CD8-positive, alpha-beta memory T cell (primary cell): ENCODE measurements at regions of chr17 and their contacts with region 1.

Region 1: DNA sequence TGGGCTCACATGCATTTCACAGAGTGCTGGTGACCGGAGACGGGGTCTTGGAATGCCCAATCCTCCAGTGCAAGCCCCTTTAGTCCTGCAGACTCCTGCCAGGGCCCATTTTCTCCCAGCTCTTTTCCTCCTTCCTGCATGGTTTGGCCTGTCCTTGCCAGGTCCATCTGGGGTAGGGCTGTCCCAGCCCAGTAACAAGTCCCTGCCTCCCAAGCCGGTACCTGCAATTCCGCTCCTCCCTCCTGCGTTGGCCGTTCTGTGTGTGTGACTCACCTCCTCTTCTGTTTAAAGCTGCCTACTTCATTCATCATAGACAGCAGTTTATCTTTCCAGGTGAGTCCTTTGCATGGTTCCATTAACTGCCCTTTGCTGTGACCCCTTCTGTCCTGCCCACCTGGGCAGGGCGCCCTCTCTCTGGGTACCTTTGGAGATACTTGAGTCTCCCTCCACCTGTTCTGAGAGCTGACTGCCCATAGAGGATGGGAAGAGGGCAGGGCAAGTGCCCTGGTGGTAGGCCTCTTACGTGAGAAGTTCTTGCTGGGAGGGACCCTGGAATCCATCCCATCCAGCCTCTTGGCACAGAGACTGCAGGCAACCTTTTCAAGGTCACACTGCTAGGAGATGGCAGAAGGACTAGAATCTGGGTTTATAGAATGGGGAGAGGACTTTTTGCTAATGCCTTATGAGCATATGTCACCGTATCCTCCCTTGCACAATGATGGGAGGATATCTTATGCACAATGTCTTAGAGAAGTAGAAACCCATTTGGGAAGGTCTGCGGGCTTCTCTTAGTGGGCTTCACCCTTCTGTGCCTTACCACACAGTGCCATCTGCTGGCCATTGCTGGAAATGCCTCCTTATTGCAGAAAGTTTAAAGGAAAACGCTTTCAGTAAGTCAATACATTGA is 29.7 kb upstream of the LGALS9 start:
- DNase-seq: peak; percentile 61 to 86 (median 74)
- H3K4me3 ChIP-seq: no peak overlapping the region
- H3K4me3 Mint-ChIP-seq: no peak overlapping the region
- H3K27ac ChIP-seq: no peak overlapping the region
- H3K27ac Mint-ChIP-seq: peak overlapping the region in 3 of 8 donors; percentile 42 to 78 (median 55)
- H3K4me1 ChIP-seq: no peaks in the 10 kb centered on the region
- H3K4me1 Mint-ChIP-seq: peaks cover 4 to 6% (median 4%) of the 10 kb centered on the region in 3 donors
- H3K27me3 ChIP-seq: no peaks in the 10 kb centered on the region
- H3K27me3 Mint-ChIP-seq: no peaks in the 10 kb centered on the region

Region 2: GRCh38 chr17:27236717-27237315 is 364.5 kb before region 1 on chr17:
- CTCF ChIA-PET with region 1: interaction called, 62 read pairs
- POLR2A ChIA-PET with region 1: no interaction called
- DNase-seq: peak; percentile 51 to 80 (median 63)
- H3K4me3 ChIP-seq: no peak overlapping the region
- H3K4me3 Mint-ChIP-seq: no peak overlapping the region
- H3K27ac ChIP-seq: no peak overlapping the region
- H3K27ac Mint-ChIP-seq: no peak overlapping the region
- H3K4me1 ChIP-seq: no peaks in the 10 kb centered on the region
- H3K4me1 Mint-ChIP-seq: no peaks in the 10 kb centered on the region
- H3K27me3 ChIP-seq: no peaks in the 10 kb centered on the region
- H3K27me3 Mint-ChIP-seq: peaks cover 0 to 2% of the 10 kb centered on the region in 2 donors

Region 3: GRCh38 chr17:27245230-27245696 is 356.1 kb before region 1 on chr17:
- CTCF ChIA-PET with region 1: interaction called, 16 read pairs
- POLR2A ChIA-PET with region 1: no interaction called
- DNase-seq: peak; percentile 7 to 60 (median 15)
- H3K4me3 ChIP-seq: no peak overlapping the region
- H3K4me3 Mint-ChIP-seq: no peak overlapping the region
- H3K27ac ChIP-seq: no peak overlapping the region
- H3K27ac Mint-ChIP-seq: peak overlapping the region in 2 of 8 donors; percentile 43 to 68
- H3K4me1 ChIP-seq: no peaks in the 10 kb centered on the region
- H3K4me1 Mint-ChIP-seq: no peaks in the 10 kb centered on the region
- H3K27me3 ChIP-seq: no peaks in the 10 kb centered on the region
- H3K27me3 Mint-ChIP-seq: peaks cover 6 to 18% of the 10 kb centered on the region in 2 donors

Region 4: DNA sequence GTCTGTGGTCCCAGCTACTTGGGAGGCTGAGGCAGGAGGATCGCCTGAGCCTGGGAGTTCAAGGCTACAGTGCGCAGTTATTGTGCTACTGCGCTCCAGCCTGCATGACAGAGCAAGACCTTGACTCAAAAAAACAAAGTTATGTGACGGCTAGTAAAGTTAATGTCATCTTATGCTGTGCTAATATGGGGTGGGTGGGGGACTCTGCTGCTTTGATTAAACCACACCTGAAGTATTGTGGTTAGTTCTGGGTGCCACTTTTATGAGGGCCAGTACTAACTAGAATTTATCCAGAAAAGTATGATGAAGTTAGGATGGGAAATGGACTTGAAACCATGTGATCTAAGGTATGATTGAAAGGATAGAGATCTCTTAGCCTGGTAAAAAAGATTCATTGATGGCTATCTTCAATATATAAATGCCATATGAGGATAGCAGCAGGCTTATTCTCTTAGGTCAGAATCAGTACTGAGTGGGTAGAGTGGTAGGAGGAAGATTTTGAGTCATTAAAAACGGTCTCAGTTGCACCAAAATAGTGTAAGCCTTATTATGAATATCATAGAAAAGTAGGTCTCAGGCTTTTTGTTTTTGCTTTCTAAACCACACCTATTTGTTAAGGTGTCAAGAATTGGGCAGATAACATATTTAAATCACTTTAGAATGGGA is 301.8 kb before region 1 on chr17:
- CTCF ChIA-PET with region 1: no interaction called
- POLR2A ChIA-PET with region 1: no interaction called
- DNase-seq: no peak
- H3K4me3 ChIP-seq: no peak overlapping the region
- H3K4me3 Mint-ChIP-seq: peak overlapping the region; percentile 13 to 81 (median 27)
- H3K27ac ChIP-seq: no peak overlapping the region
- H3K27ac Mint-ChIP-seq: peak overlapping the region in 7 of 8 donors; percentile 5 to 92 (median 57)
- H3K4me1 ChIP-seq: peaks cover 53% of the 10 kb centered on the region
- H3K4me1 Mint-ChIP-seq: peaks cover 61 to 86% (median 79%) of the 10 kb centered on the region in 3 donors
- H3K27me3 ChIP-seq: no peaks in the 10 kb centered on the region
- H3K27me3 Mint-ChIP-seq: no peaks in the 10 kb centered on the region

Region 5: GRCh38 chr17:27353461-27354050 is 247.8 kb before region 1 on chr17:
- CTCF ChIA-PET with region 1: interaction called, 78 read pairs
- POLR2A ChIA-PET with region 1: no interaction called
- DNase-seq: peak; percentile 80 to 92 (median 86)
- H3K4me3 ChIP-seq: peak overlapping the region; percentile 80
- H3K4me3 Mint-ChIP-seq: peak overlapping the region; percentile 69 to 94 (median 86)
- H3K27ac ChIP-seq: peak overlapping the region; percentile 90
- H3K27ac Mint-ChIP-seq: peak overlapping the region; percentile 69 to 100 (median 94)
- H3K4me1 ChIP-seq: peaks cover 10% of the 10 kb centered on the region
- H3K4me1 Mint-ChIP-seq: peaks cover 15 to 35% (median 22%) of the 10 kb centered on the region in 3 donors
- H3K27me3 ChIP-seq: no peaks in the 10 kb centered on the region
- H3K27me3 Mint-ChIP-seq: no peaks in the 10 kb centered on the region

Region 6: DNA sequence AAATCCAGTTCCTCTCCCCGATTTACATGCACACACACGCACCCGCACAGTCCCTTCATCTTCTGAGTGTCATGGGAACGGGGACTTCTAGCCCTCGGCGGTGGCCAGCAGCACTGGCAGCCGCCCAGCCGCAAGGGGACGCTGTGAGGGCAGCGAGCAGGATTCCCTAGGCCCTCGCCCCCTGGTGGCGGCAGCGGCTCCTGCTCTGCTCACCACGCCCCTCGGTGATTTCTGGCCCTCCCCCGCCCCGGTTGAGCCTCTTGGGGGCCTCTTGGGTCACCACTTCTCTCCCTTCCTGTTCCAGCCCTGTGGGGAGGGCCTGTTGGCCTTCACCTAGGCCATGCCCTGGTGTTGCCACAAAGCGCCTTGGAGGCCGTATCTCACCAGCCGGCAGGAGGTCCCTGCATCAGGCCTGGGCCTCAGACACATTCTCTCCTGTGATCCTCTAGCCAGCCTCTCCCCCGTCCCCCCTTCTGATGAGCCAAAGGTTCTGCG is 220.3 kb before region 1 on chr17:
- CTCF ChIA-PET with region 1: interaction called, 39 read pairs
- POLR2A ChIA-PET with region 1: no interaction called
- DNase-seq: peak; percentile 50 to 81 (median 71)
- H3K4me3 ChIP-seq: no peak overlapping the region
- H3K4me3 Mint-ChIP-seq: no peak overlapping the region
- H3K27ac ChIP-seq: no peak overlapping the region
- H3K27ac Mint-ChIP-seq: no peak overlapping the region
- H3K4me1 ChIP-seq: peaks cover 3% of the 10 kb centered on the region
- H3K4me1 Mint-ChIP-seq: no peaks in the 10 kb centered on the region
- H3K27me3 ChIP-seq: no peaks in the 10 kb centered on the region
- H3K27me3 Mint-ChIP-seq: peaks cover 18 to 31% of the 10 kb centered on the region in 2 donors

Region 7: DNA sequence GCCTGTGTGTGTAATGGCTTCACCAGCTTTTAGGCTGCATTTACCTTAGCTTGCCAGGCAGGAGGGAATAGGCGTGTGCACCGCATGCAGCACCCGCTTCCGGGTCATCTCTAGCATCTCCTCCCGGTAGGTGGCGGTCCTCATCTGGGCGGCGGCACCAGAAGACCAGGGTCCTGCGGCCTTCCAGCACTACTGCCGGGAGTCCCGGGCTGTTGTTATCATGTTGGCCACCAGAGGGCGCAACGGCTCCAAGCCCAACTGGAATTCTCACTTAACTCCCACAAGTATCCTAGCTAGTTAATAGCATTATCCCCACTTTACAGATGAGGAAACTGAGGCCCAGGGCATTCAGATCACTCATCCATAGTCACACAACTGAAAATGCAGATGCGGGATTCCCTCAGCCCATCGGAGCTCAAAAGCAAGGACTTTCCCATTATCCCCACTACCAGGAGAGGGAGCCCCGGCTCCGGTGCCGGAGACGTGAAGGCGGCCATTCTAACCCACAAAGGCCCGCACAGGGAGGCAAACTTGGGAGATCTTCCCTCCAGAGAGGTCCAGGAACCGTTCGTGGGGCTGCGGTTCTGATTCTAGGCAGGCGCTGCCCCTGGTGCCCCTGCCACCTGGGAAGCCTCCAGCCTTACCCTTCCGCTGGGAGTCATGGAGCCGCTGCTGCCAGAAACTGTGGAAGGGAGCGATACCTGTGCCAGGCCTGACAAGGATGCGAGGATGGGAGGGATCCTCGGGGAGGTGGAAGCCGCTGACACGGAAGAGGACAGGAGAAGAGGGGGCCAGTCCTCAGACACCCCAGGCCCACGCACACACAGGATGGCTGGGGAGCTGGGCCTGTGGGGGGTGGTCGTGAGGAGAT is 53.6 kb after region 1 on chr17:
- CTCF ChIA-PET with region 1: interaction called, 161 read pairs
- POLR2A ChIA-PET with region 1: no interaction called
- DNase-seq: peak; percentile 35 to 70 (median 52)
- H3K4me3 ChIP-seq: no peak overlapping the region
- H3K4me3 Mint-ChIP-seq: no peak overlapping the region
- H3K27ac ChIP-seq: no peak overlapping the region
- H3K27ac Mint-ChIP-seq: peak overlapping the region in 1 of 8 donors; percentile 43
- H3K4me1 ChIP-seq: no peaks in the 10 kb centered on the region
- H3K4me1 Mint-ChIP-seq: peaks cover 5 to 6% (median 6%) of the 10 kb centered on the region in 3 donors
- H3K27me3 ChIP-seq: no peaks in the 10 kb centered on the region
- H3K27me3 Mint-ChIP-seq: no peaks in the 10 kb centered on the region

Region 8: GRCh38 chr17:27670791-27671590 is 69.7 kb after region 1 on chr17:
- CTCF ChIA-PET with region 1: no interaction called
- POLR2A ChIA-PET with region 1: no interaction called
- DNase-seq: no peak
- H3K4me3 ChIP-seq: no peak overlapping the region
- H3K4me3 Mint-ChIP-seq: no peak overlapping the region
- H3K27ac ChIP-seq: no peak overlapping the region
- H3K27ac Mint-ChIP-seq: no peak overlapping the region
- H3K4me1 ChIP-seq: no peaks in the 10 kb centered on the region
- H3K4me1 Mint-ChIP-seq: no peaks in the 10 kb centered on the region
- H3K27me3 ChIP-seq: no peaks in the 10 kb centered on the region
- H3K27me3 Mint-ChIP-seq: peaks cover 1 to 3% of the 10 kb centered on the region in 2 donors

Region 9: DNA sequence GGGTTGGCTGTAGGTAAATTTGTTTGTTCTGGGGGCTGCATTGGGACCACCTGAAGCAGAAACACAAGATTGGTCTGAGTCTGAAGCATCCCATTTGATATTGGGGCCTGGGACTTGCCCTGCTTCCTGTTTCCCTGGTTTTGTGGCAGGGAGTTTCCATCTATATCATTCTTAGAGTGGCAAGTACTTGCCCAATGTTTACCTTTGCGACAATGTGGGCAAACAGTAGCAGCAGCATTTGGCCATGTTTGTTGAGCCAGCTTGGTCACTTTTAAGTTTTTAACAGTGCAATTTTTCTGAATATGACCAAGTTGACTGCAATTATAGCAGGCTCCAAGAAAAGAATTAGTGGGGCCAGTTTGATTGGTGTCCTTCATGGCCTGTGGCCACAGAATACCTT is 91.4 kb after region 1 on chr17:
- CTCF ChIA-PET with region 1: no interaction called
- POLR2A ChIA-PET with region 1: no interaction called
- DNase-seq: no peak
- H3K4me3 ChIP-seq: no peak overlapping the region
- H3K4me3 Mint-ChIP-seq: no peak overlapping the region
- H3K27ac ChIP-seq: no peak overlapping the region
- H3K27ac Mint-ChIP-seq: no peak overlapping the region
- H3K4me1 ChIP-seq: no peaks in the 10 kb centered on the region
- H3K4me1 Mint-ChIP-seq: no peaks in the 10 kb centered on the region
- H3K27me3 ChIP-seq: no peaks in the 10 kb centered on the region
- H3K27me3 Mint-ChIP-seq: peaks cover 7 to 22% of the 10 kb centered on the region in 2 donors